ENCODE measurements at regions of chr5 and their contacts with region 1.

Region 1: DNA sequence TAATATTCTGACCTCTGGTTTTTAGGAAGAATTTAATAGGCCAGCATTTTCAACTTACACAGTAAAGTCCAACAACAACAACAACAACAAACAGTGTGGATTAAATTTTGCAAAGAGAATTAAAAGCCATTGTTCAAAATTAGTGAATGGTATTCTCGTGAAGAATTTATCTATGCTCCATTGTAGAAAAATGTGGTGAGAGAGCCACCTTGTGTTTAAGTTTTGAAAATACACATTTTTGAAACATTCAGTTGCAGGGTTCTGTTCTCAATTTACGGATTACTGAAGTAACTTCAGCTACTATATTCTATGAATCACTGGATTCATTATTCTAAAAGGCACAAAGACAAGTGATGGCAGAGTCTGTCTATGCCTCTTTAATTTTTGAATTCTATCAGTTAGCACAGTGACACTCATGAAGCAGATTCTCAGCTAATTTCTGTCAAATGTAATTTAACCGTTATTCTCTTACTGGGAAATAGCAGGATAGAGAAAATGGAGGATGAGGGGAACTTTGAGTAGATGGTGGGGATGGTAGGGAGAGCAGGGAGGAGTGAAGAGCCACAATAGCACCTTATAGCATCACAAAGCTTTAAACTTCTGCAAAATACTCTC is 11.0 kb downstream of the CCDC152 start:
- DNase-seq: peak in 4 of 9 donors; percentile 2 to 16 (median 10)
- ATAC-seq: no peak
- H3K4me3 ChIP-seq: no peak overlapping the region
- H3K4me3 Mint-ChIP-seq: no peak overlapping the region
- H3K27ac ChIP-seq: no peak overlapping the region
- H3K27ac Mint-ChIP-seq: no peak overlapping the region
- H3K4me1 ChIP-seq: no peaks in the 10 kb centered on the region
- H3K4me1 Mint-ChIP-seq: no peaks in the 10 kb centered on the region
- H3K27me3 ChIP-seq: no peaks in the 10 kb centered on the region
- H3K27me3 Mint-ChIP-seq: peaks cover 4 to 29% (median 7%) of the 10 kb centered on the region in 5 donors

Region 2: DNA sequence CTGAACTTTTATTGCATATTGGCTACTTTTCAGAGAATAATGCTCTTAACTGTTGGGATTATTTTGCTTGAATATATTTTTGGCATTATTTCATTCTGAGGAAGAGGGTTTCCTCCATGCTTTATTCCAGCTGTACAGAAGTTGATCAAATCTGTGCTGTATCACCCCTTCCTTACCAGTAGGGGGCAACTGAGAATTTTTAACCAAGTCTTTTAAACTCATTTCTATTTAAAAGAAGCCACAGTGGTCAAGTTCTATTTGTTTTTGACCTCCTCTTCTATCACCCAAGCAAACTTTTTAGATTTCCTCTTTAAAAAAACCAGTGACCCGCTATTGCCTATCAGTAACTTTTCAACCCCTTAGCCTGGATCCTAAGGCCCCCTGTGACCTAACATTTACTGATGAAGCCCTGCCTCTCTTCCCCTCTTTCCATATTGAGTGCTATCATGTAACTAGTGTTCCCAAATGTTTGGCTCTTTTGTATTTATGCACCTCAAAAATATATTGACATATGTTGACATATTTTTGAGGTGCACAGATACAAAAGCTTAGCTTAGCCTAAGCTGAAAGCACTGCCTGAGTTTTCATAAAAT is 761.9 kb before region 1 on chr5:
- CTCF ChIA-PET with region 1: no interaction called
- POLR2A ChIA-PET with region 1: no interaction called
- intact Hi-C with region 1: loop called in 1 of 2 experiments (anchors 1 kb)
- DNase-seq: peak in 5 of 9 donors; percentile 1 to 9 (median 6)
- ATAC-seq: no peak
- H3K4me3 ChIP-seq: no peak overlapping the region
- H3K4me3 Mint-ChIP-seq: no peak overlapping the region
- H3K27ac ChIP-seq: no peak overlapping the region
- H3K27ac Mint-ChIP-seq: no peak overlapping the region
- H3K4me1 ChIP-seq: no peaks in the 10 kb centered on the region
- H3K4me1 Mint-ChIP-seq: no peaks in the 10 kb centered on the region
- H3K27me3 ChIP-seq: no peaks in the 10 kb centered on the region
- H3K27me3 Mint-ChIP-seq: peaks cover 4 to 14% (median 6%) of the 10 kb centered on the region in 5 donors

Region 3: GRCh38 chr5:42423285-42424165 is 344.1 kb before region 1 on chr5 and contains the start of gene GHR:
- CTCF ChIA-PET with region 1: no interaction called
- POLR2A ChIA-PET with region 1: no interaction called
- intact Hi-C with region 1: loop called in 1 of 2 experiments (anchors 1 kb)
- DNase-seq: peak in 2 of 9 donors; percentile 4 to 21
- ATAC-seq: peak; percentile 61
- H3K4me3 ChIP-seq: no peak within 1 kb of the TSS
- H3K4me3 Mint-ChIP-seq: peak within 1 kb of the TSS in 1 of 10 donors; percentile 9
- H3K27ac ChIP-seq: no peak within 1 kb of the TSS
- H3K27ac Mint-ChIP-seq: no peak within 1 kb of the TSS
- H3K4me1 ChIP-seq: no peaks in the 10 kb centered on the region
- H3K4me1 Mint-ChIP-seq: no peaks in the 10 kb centered on the region
- H3K27me3 ChIP-seq: no peaks in the 10 kb centered on the region
- H3K27me3 Mint-ChIP-seq: peaks cover 11 to 42% (median 26%) of the 10 kb centered on the region in 5 donors
- total RNA-seq, gene GHR: not detected

Region 4: GRCh38 chr5:42583322-42583721 is 184.3 kb before region 1 on chr5:
- CTCF ChIA-PET with region 1: interaction called, 3 read pairs
- POLR2A ChIA-PET with region 1: no interaction called
- intact Hi-C with region 1: loop called in 1 of 2 experiments (anchors 1 kb)
- DNase-seq: peak in 5 of 9 donors; percentile 8 to 24 (median 12)
- ATAC-seq: peak; percentile 68
- H3K4me3 ChIP-seq: no peak overlapping the region
- H3K4me3 Mint-ChIP-seq: no peak overlapping the region
- H3K27ac ChIP-seq: no peak overlapping the region
- H3K27ac Mint-ChIP-seq: no peak overlapping the region
- H3K4me1 ChIP-seq: no peaks in the 10 kb centered on the region
- H3K4me1 Mint-ChIP-seq: peaks cover 0 to 6% (median 2%) of the 10 kb centered on the region in 7 donors
- H3K27me3 ChIP-seq: peaks cover 0 to 6% of the 10 kb centered on the region in 2 donors
- H3K27me3 Mint-ChIP-seq: peaks cover 15 to 39% (median 21%) of the 10 kb centered on the region in 5 donors

Region 5: GRCh38 chr5:43225649-43226245 is 458.1 kb after region 1 on chr5:
- CTCF ChIA-PET with region 1: no interaction called
- POLR2A ChIA-PET with region 1: no interaction called
- intact Hi-C with region 1: no loop called
- DNase-seq: no peak
- ATAC-seq: no peak
- H3K4me3 ChIP-seq: no peak overlapping the region
- H3K4me3 Mint-ChIP-seq: no peak overlapping the region
- H3K27ac ChIP-seq: no peak overlapping the region
- H3K27ac Mint-ChIP-seq: no peak overlapping the region
- H3K4me1 ChIP-seq: no peaks in the 10 kb centered on the region
- H3K4me1 Mint-ChIP-seq: no peaks in the 10 kb centered on the region
- H3K27me3 ChIP-seq: no peaks in the 10 kb centered on the region
- H3K27me3 Mint-ChIP-seq: no peaks in the 10 kb centered on the region

Measured in naive thymus-derived CD4-positive, alpha-beta T cell (primary cell).